ENCODE measurements at regions of chr2 and their contacts with region 1.

Region 1: GRCh38 chr2:88187038-88187676 is 17.0 kb downstream of the THNSL2 start:
- DNase-seq: peak; percentile 80
- H3K4me3 Mint-ChIP-seq: no peak overlapping the region
- H3K27ac Mint-ChIP-seq: no peak overlapping the region
- H3K4me1 Mint-ChIP-seq: peaks cover 8% of the 10 kb centered on the region
- H3K27me3 Mint-ChIP-seq: no peaks in the 10 kb centered on the region
- CTCF ChIP-seq: peak; percentile 74

Region 2: GRCh38 chr2:88003074-88003755 is 183.9 kb before region 1 on chr2:
- CTCF ChIA-PET with region 1: no interaction called
- POLR2A ChIA-PET with region 1: no interaction called
- intact Hi-C with region 1: no loop called
- DNase-seq: no peak
- H3K4me3 Mint-ChIP-seq: no peak overlapping the region
- H3K27ac Mint-ChIP-seq: no peak overlapping the region
- H3K4me1 Mint-ChIP-seq: no peaks in the 10 kb centered on the region
- H3K27me3 Mint-ChIP-seq: no peaks in the 10 kb centered on the region
- CTCF ChIP-seq: no peak

Region 3: GRCh38 chr2:88016086-88016959 is 170.8 kb before region 1 on chr2 and contains the start of gene RNU2-63P:
- CTCF ChIA-PET with region 1: no interaction called
- POLR2A ChIA-PET with region 1: no interaction called
- intact Hi-C with region 1: no loop called
- DNase-seq: peak; percentile 92
- H3K4me3 Mint-ChIP-seq: peak within 1 kb of the TSS; percentile 98
- H3K27ac Mint-ChIP-seq: peak within 1 kb of the TSS; percentile 100
- H3K4me1 Mint-ChIP-seq: peaks cover 13% of the 10 kb centered on the region
- H3K27me3 Mint-ChIP-seq: no peaks in the 10 kb centered on the region
- CTCF ChIP-seq: no peak
- total RNA-seq, gene RNU2-63P: 5.0 and 9.1 TPM in 2 replicates

Region 4: DNA sequence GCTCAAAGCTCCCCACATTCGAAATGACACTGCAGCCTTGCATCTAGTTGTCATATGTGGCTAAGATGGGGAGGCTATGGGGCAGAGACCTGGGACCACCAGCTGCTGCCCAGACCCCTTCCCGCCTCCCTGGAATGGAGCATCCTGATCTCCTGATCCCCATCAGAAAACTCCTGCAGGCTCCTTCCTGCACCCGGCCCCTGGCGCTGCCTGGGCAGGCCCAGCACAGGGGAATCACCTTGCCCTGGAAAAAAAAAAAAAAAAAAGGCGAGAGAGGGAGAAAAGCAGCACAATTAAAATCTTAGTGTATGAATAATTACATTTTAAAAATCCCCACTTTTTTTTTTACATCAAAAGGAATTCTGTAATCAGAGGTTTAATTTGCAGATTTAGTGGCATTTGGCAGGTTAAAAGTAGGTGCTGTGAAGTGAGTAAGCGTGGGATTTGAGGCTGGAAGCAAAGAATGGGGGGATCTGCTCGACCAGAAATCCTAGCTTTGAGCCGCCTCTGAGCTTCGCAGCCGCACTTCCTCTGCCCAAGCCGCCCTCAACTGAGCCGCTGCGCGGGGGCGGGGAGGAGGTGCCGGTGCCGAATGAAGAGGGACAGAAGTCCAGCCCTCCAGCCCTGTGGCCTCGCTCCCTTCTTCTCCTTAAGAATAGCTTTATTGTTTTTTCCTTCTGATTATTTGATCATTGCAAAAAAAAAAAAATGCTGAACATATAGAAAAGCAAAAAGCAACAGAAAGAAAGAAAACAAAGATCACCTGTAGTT is 12.9 kb after region 1 on chr2:
- CTCF ChIA-PET with region 1: interaction called, 21 read pairs
- POLR2A ChIA-PET with region 1: no interaction called
- intact Hi-C with region 1: no loop called
- DNase-seq: peak; percentile 35
- H3K4me3 Mint-ChIP-seq: peak overlapping the region; percentile 53
- H3K27ac Mint-ChIP-seq: no peak overlapping the region
- H3K4me1 Mint-ChIP-seq: peaks cover 10% of the 10 kb centered on the region
- H3K27me3 Mint-ChIP-seq: peaks cover 31% of the 10 kb centered on the region
- CTCF ChIP-seq: no peak

Region 5: DNA sequence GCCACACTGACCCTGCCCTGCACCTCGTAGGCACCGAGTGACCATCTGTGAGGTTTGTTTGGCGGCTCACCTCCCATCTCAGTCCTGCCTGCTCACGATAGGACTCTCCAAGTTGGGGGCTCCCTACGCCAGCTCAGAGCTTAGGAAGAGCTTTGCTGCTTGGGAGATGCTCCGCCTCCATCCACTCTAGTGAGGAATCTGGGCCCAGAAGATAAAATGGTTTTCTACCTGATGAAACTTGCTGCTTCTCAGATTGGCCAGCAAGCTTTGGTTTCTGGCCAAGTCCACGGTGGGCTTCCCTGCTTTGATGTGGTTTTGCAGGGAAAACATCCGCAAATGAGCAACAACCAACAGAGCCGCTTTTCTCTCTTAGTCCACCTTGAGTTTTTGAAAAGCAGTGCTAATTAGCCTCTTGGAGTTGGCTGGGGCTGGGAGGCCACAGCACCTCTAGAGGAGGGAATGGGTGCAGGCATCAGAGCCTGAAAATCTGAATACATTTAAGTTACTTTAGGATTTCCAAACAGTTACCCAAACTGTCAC is 25.2 kb after region 1 on chr2:
- CTCF ChIA-PET with region 1: interaction called, 13 read pairs
- POLR2A ChIA-PET with region 1: no interaction called
- intact Hi-C with region 1: no loop called
- DNase-seq: peak; percentile 42
- H3K4me3 Mint-ChIP-seq: no peak overlapping the region
- H3K27ac Mint-ChIP-seq: no peak overlapping the region
- H3K4me1 Mint-ChIP-seq: no peaks in the 10 kb centered on the region
- H3K27me3 Mint-ChIP-seq: peaks cover 23% of the 10 kb centered on the region
- CTCF ChIP-seq: peak; percentile 32

Region 6: GRCh38 chr2:88400037-88400767 is 213.0 kb after region 1 on chr2:
- CTCF ChIA-PET with region 1: interaction called, 12 read pairs
- POLR2A ChIA-PET with region 1: no interaction called
- intact Hi-C with region 1: no loop called
- DNase-seq: no peak
- H3K4me3 Mint-ChIP-seq: no peak overlapping the region
- H3K27ac Mint-ChIP-seq: no peak overlapping the region
- H3K4me1 Mint-ChIP-seq: no peaks in the 10 kb centered on the region
- H3K27me3 Mint-ChIP-seq: no peaks in the 10 kb centered on the region
- CTCF ChIP-seq: no peak

Region 7: DNA sequence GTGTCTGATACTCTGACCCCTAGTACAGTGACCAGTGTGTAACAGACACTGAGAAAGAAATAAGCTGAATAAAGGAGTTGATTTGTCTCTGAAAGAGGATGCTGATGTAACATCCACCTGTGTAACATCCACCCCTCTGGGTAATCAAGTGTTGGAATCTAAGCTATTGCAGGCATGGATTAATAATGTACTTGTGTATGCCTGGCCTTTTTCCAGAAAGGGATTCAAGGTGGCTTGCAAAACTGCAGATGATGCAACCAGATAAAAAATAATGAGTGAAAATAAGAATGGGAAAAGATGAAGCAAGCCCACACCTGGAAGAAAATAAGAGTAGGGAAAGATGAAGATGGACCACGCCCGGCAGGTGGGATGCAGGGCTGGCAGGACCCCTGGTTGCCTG is 313.5 kb after region 1 on chr2:
- CTCF ChIA-PET with region 1: interaction called, 23 read pairs
- POLR2A ChIA-PET with region 1: no interaction called
- intact Hi-C with region 1: no loop called
- DNase-seq: peak; percentile 93
- H3K4me3 Mint-ChIP-seq: no peak overlapping the region
- H3K27ac Mint-ChIP-seq: peak overlapping the region; percentile 55
- H3K4me1 Mint-ChIP-seq: peaks cover 26% of the 10 kb centered on the region
- H3K27me3 Mint-ChIP-seq: no peaks in the 10 kb centered on the region
- CTCF ChIP-seq: no peak

Measured in MCF 10A (cell line).